Mammary epithelial cell (primary cell): ENCODE measurements at regions of chr11 and their contacts with region 1.

Region 1: DNA sequence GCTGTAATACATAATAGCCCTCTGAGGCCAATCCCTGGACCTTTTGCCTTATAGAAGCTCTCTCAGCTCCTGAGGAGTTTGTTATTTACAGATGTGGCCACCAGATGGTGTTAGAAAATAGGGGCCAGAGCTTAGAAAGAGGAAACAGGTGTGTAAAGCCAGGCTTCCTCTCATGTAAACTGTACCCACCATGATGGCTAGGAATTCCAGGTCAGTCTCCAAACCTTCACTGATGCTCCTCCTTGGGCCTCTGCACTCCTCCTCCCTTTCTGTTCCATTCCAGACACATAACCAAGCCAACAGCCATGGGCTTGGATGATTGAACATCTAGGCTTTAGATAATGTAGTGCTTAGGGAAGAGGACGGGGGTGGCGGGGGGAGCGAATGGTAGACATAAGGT is 39.7 kb downstream of the USP35 start:
- DNase-seq: peak; percentile 39
- H3K4me3 ChIP-seq: no peak overlapping the region
- H3K27ac ChIP-seq: no peak overlapping the region
- H3K4me1 ChIP-seq: peaks cover 4% of the 10 kb centered on the region
- H3K27me3 ChIP-seq: no peaks in the 10 kb centered on the region
- CTCF ChIP-seq: peak; percentile 43 to 66

Region 2: DNA sequence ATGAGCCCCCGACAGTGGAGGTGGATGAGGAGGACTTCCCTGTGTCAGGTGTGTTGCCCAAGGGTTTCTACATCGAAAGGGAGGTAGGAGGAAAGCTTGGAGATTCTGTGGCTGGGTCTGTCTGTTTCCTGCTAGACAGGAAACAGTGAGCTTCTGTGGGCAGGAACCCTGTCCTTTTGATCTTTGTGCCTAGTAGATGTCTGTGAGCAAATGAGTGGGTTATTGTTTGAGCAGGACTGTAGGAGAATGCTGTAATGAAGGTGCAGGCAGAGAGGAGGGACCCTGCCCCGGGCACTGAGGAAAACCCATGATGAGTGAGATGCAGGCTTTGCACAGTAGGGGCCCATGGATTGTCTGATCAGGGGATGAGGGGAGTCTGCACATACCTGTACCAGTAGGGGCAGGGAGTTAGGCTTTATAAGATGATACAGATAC is 25.7 kb before region 1 on chr11:
- CTCF ChIA-PET with region 1: no interaction called
- dilution Hi-C with region 1: no loop called
- in situ Hi-C with region 1: no loop called
- intact Hi-C with region 1: no loop called
- DNase-seq: no peak
- H3K4me3 ChIP-seq: no peak overlapping the region
- H3K27ac ChIP-seq: no peak overlapping the region
- H3K4me1 ChIP-seq: no peaks in the 10 kb centered on the region
- H3K27me3 ChIP-seq: no peaks in the 10 kb centered on the region
- CTCF ChIP-seq: no peak

Region 3: GRCh38 chr11:78432956-78433355 is 204.5 kb after region 1 on chr11:
- CTCF ChIA-PET with region 1: no interaction called
- dilution Hi-C with region 1: no loop called
- in situ Hi-C with region 1: no loop called
- intact Hi-C with region 1: loop called (anchors 1 kb)
- DNase-seq: no peak
- H3K4me3 ChIP-seq: no peak overlapping the region
- H3K27ac ChIP-seq: no peak overlapping the region
- H3K4me1 ChIP-seq: peaks cover 9% of the 10 kb centered on the region
- H3K27me3 ChIP-seq: no peaks in the 10 kb centered on the region
- CTCF ChIP-seq: no peak

Region 4: GRCh38 chr11:78564490-78565467 is 336.3 kb after region 1 on chr11:
- CTCF ChIA-PET with region 1: interaction called, 14 read pairs
- dilution Hi-C with region 1: no loop called
- in situ Hi-C with region 1: loop called (anchors 10 kb)
- intact Hi-C with region 1: loop called (anchors 1 kb)
- DNase-seq: peak; percentile 42
- H3K4me3 ChIP-seq: no peak overlapping the region
- H3K27ac ChIP-seq: no peak overlapping the region
- H3K4me1 ChIP-seq: peaks cover 31% of the 10 kb centered on the region
- H3K27me3 ChIP-seq: no peaks in the 10 kb centered on the region
- CTCF ChIP-seq: peak; percentile 60 to 61